Naive thymus-derived CD4-positive, alpha-beta T cell (primary cell): ENCODE measurements at regions of chr4 and their contacts with region 1.

Region 1: DNA sequence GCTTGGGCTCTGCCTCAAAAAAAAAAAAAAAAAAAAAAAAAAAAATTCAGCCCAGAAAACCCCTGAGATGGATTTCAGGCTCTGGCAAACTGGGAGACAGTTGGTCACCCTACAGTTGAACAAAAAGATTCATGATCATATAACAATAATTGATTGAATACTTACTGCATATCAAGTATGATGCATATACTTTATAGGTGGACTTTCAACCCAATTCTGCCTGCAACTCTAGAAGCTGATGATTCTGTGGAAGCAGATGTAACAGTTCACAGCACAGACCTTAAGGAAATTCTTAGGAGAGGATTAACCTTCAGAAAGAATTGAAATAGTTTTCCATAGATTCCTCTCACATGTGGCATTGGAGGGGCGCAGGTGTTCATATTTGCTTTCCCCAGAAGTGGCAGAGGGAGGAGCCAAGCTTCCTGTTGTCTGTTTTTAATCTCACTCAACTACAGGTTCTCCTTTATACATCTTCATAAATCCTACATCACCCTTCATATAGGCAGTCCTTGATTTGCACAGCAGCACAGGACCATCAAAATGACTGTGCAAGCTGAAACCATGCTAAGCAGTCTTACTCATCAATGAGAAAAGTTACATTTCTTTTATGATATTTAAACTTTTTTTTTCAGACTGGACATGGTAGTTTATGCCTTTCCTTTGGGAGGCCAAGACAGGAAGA is 149.4 kb upstream of the KLF3 start:
- DNase-seq: peak in 2 of 9 donors; percentile 18 to 20
- ATAC-seq: no peak
- H3K4me3 ChIP-seq: peak overlapping the region; percentile 38
- H3K4me3 Mint-ChIP-seq: peak overlapping the region; percentile 57 to 94 (median 80)
- H3K27ac ChIP-seq: no peak overlapping the region
- H3K27ac Mint-ChIP-seq: peak overlapping the region in 8 of 9 donors; percentile 27 to 93 (median 74)
- H3K4me1 ChIP-seq: peaks cover 50 to 54% of the 10 kb centered on the region in 2 donors
- H3K4me1 Mint-ChIP-seq: peaks cover 35 to 96% (median 85%) of the 10 kb centered on the region in 7 donors
- H3K27me3 ChIP-seq: no peaks in the 10 kb centered on the region
- H3K27me3 Mint-ChIP-seq: peaks cover 0 to 35% (median 0%) of the 10 kb centered on the region in 5 donors

Region 2: DNA sequence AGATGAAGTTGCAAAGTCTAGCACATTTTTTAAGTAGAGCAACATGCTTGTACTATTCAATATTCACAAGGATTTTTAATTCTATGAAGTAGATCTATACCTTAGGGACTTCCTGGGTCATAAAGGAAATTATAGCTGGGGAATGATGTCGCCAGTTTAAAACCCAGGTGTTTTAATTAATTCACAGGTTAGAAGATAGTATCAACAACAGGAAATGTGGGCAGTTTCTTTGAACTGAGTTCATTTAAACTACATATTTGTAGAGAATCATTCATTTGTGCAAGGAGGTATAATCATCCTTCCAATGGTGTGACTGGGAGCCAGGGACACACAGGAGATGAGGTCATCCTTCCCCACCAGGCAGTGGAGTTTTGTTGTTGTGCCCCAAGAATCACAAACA is 31.9 kb before region 1 on chr4:
- CTCF ChIA-PET with region 1: no interaction called
- POLR2A ChIA-PET with region 1: interaction called, 3 read pairs
- intact Hi-C with region 1: loop called in 1 of 2 experiments (anchors 5 kb)
- DNase-seq: peak in 3 of 9 donors; percentile 13 to 16 (median 16)
- ATAC-seq: no peak
- H3K4me3 ChIP-seq: no peak overlapping the region
- H3K4me3 Mint-ChIP-seq: peak overlapping the region in 7 of 10 donors; percentile 2 to 66 (median 17)
- H3K27ac ChIP-seq: no peak overlapping the region
- H3K27ac Mint-ChIP-seq: peak overlapping the region in 4 of 9 donors; percentile 19 to 71 (median 42)
- H3K4me1 ChIP-seq: peaks cover 9% of the 10 kb centered on the region in 2 donors
- H3K4me1 Mint-ChIP-seq: peaks cover 2 to 35% (median 17%) of the 10 kb centered on the region in 7 donors
- H3K27me3 ChIP-seq: no peaks in the 10 kb centered on the region
- H3K27me3 Mint-ChIP-seq: peaks cover 0 to 11% (median 0%) of the 10 kb centered on the region in 5 donors

Region 3: GRCh38 chr4:38559374-38559773 is 44.8 kb after region 1 on chr4:
- CTCF ChIA-PET with region 1: no interaction called
- POLR2A ChIA-PET with region 1: no interaction called
- intact Hi-C with region 1: loop called in 1 of 2 experiments (anchors 5 kb)
- DNase-seq: no peak
- ATAC-seq: no peak
- H3K4me3 ChIP-seq: no peak overlapping the region
- H3K4me3 Mint-ChIP-seq: no peak overlapping the region
- H3K27ac ChIP-seq: no peak overlapping the region
- H3K27ac Mint-ChIP-seq: peak overlapping the region in 1 of 9 donors; percentile 21
- H3K4me1 ChIP-seq: no peaks in the 10 kb centered on the region
- H3K4me1 Mint-ChIP-seq: peaks cover 8 to 31% (median 20%) of the 10 kb centered on the region in 7 donors
- H3K27me3 ChIP-seq: no peaks in the 10 kb centered on the region
- H3K27me3 Mint-ChIP-seq: peaks cover 0 to 53% (median 0%) of the 10 kb centered on the region in 5 donors